ENCODE measurements at regions of chr12 and their contacts with region 1.

Region 1: DNA sequence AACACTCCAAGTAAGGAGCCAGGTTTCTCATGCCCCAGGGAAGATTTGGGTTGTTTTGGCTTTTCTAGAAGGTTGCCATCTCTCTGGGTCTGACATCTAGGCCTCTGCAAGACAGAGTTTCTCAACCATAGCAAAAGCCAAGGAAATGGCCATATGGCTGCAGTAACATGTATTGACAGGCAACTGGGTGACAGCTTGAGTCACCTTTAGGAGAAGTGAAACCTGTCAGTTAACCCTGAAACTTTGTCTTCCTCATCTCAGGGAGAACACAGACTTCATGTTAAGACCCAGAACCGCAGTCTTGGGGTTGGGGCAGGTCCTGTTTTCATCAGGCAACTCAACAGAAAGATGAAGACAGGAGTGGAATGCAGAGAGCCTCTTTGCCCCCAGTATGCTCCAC is 46.0 kb upstream of the PLBD1 start:
- DNase-seq: no peak
- ATAC-seq: peak; percentile 37

Region 2: DNA sequence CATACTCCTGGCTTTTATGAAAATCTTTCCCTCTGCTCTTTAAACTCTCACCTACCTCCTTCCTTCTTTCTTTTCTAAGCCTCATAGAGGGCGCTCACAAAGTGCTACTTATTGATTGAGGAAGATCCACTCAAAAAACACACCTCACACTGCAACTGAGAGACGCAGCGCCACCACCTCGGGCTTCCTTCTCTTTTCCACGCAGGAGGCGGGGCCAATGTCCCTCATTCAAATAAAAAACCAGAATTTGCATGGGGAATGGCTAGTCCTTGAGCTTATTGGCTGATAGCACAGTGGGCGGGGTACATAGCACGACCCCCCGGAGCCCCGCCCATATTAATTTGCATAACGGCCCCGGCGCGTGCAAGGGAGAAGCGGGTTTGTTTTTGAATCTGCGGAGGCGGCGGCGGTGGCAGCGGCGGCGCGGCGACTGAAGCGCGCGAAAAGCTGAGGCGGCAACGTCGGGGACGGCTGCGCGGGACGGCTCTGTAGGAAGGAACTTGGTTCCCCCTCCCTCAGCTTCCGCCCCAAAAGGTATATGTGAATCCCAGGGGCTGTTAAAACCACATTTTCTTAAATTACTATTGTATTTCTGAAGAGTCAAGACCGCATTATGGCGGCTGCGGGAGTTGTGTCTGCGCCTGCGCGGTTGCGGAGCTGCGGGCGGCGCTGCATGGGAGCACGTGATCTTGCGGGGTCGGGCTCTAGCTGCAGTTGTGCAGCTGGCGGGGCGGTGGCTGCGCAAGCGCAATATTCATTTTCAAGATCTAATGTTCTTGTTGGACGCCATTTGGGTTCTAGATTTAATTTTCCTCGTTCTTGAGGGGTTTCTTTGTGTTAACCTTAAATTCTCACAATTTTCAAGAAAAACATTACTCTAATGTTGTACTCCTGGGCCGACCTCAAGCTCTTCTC is 248.2 kb before region 1 on chr12 and contains the start of gene ATF7IP:
- intact Hi-C with region 1: no loop called
- DNase-seq: peak; percentile 97
- ATAC-seq: peak; percentile 98
- total RNA-seq, gene ATF7IP: 57.1 TPM

Region 3: DNA sequence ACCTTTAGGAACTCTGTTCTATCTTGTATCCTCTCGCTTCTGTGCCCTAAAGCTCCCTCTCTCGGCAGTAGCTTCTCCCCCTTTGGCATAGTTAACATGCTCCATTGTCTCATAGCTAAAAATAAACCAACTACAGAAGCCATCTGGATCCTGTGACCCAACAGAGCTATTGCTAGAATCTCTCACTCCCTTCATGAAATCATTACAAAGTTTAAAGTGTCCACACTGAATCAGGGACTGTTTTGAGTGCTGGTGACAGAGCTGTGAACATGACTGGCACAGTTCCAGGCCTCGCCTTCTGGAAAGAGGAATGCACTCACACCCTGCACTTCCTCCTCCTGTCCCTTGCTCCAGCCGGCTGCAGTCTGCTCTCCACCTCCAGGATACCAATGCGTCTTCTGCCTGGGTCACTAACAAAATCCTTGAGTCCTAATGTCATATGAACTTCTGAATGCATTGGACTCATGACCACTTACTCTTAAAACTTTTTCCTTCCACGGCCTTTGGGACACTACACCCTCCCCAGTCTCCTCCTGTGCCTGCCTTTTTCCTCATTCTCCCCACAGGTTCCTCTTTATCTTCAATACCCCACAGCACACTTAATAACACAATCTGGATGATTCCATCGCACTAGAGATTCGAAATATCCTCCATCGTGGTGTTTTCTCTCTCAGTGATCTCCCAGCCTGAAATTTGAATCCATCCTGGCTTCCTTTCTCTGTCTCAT is 59.3 kb before region 1 on chr12:
- intact Hi-C with region 1: loop called (anchors 5 kb)
- DNase-seq: peak; percentile 94
- ATAC-seq: peak; percentile 94

Region 4: DNA sequence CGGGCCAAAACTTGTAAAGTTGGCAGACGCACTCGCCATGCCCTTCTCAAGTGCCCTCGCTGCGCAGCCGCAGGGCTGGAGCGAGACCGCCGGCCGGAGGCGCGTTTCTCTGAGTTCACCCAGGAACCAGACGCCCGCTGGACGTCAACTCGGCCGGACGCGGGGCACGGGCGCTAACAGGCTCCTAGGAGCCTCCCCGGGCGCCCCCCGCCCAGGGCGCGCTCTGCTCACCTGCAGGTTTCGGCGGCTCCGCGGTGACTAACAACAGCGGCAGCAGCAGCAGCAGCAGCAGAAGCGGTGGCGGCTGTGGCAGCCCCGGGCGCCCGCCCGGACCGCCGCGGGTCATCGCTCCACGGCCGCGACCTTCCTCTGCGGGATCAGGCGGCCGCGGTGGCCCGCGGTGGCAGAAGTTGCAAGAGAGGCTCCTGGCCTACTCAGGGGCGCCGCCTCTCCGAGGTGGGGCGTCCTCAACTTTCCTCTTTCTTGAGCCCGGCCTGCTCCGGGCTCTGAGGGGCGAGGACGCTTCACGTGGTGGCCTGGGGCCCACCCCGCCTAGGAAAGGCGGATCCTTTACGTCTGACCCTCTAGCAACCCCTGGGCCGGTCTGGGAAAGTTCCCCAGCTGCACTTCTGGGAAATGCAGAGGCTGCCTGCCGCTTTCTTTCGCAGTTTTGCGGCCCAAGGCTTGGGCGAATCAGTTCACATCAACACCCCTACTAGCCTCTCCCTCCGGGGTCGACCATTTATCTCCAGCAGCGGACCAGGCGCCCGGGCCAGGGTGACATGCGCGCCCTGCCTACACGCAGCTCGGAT is 46.2 kb before region 1 on chr12 and contains the start of gene PLBD1:
- intact Hi-C with region 1: loop called (anchors 5 kb)
- DNase-seq: peak; percentile 93
- ATAC-seq: peak; percentile 92
- total RNA-seq, gene PLBD1: 24.4 TPM